OCI-LY7 (cell line): ENCODE measurements at regions of chr9 and their contacts with region 1.

Region 1: GRCh38 chr9:33225319-33226149 is 14.4 kb upstream of the SPINK4 start:
- DNase-seq: peak; percentile 80
- H3K4me3 ChIP-seq: no peak overlapping the region
- H3K27ac ChIP-seq: no peak overlapping the region
- H3K4me1 ChIP-seq: peaks cover 61% of the 10 kb centered on the region
- CTCF ChIP-seq: peak; percentile 96

Region 2: DNA sequence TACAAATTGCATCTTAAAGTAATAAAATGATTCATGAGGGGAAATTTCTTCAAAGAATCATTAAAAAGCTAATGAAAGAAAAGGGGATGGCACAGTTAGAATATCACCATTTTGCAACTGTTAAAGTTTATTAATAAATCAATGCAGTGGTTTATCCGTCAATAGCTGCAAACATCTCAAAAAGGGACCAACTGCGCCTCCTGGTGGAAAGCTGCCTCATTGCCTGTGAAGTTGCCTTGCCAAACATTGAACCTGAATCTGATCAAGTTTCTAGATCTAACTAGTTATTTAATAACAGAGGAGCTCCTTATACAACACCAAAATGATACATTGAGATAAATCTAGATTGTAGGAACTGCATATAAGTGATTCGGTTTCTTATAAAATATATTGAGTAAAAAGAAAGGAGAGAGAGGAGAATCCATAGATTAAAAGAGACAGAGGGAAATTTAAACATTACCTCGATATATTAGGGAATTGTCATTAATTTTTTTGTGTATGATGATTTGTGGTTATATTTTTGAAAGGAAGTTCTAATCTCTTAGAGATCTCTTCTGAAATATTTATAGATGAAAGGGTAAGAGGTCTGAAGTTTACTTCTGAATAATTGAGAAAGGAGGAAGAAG is 645.7 kb before region 1 on chr9:
- CTCF ChIA-PET with region 1: no interaction called
- POLR2A ChIA-PET with region 1: no interaction called
- intact Hi-C with region 1: loop called (anchors 10 kb)
- DNase-seq: peak; percentile 77
- H3K4me3 ChIP-seq: no peak overlapping the region
- H3K27ac ChIP-seq: peak overlapping the region; percentile 7
- H3K4me1 ChIP-seq: peaks cover 43% of the 10 kb centered on the region
- CTCF ChIP-seq: peak; percentile 99

Region 3: DNA sequence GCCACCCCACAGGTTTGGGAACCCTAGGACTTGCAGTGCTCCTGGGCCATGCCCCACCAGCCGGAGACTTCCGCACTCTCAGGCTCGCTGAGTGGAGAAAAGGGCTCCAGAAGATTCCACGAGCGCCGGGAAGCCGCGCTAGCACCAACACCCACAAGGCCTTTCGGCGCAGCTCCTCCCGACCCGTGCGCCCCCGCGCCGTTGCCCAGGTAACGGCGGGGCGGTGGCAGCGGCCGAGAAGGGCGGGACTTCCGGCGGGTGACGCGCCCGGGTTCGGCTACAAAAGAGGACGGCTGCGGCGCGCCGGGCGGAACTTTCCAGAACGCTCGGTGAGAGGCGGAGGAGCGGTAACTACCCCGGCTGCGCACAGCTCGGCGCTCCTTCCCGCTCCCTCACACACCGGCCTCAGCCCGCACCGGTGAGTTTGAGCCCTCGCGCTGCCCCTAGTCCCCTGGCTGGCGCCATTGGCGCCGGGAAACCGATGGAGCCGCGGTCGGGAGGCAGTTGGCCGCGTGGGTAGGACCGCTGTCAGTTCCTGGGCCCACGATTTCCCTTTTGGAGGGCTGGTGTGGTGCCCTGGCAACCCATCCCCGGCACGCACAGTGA is 200.5 kb before region 1 on chr9 and contains the start of gene DNAJA1:
- CTCF ChIA-PET with region 1: no interaction called
- POLR2A ChIA-PET with region 1: interaction called, 6 read pairs
- intact Hi-C with region 1: loop called (anchors 5 kb)
- DNase-seq: peak; percentile 95
- H3K4me3 ChIP-seq: peak within 1 kb of the TSS; percentile 100
- H3K27ac ChIP-seq: peak within 1 kb of the TSS; percentile 79
- H3K4me1 ChIP-seq: peaks cover 59% of the 10 kb centered on the region
- CTCF ChIP-seq: no peak
- total RNA-seq, gene DNAJA1: 110 and 136 TPM in 2 replicates

Region 4: GRCh38 chr9:33081128-33081851 is 144.2 kb before region 1 on chr9:
- CTCF ChIA-PET with region 1: interaction called, 5 read pairs
- POLR2A ChIA-PET with region 1: interaction called, 7 read pairs
- intact Hi-C with region 1: loop called (anchors 1 kb)
- DNase-seq: peak; percentile 86
- H3K4me3 ChIP-seq: peak overlapping the region; percentile 41
- H3K27ac ChIP-seq: no peak overlapping the region
- H3K4me1 ChIP-seq: peaks cover 23% of the 10 kb centered on the region
- CTCF ChIP-seq: peak; percentile 97

Region 5: GRCh38 chr9:33167046-33167808 is 58.3 kb before region 1 on chr9 and contains the start of gene B4GALT1:
- CTCF ChIA-PET with region 1: interaction called, 3 read pairs
- POLR2A ChIA-PET with region 1: no interaction called
- intact Hi-C with region 1: loop called (anchors 2 kb)
- DNase-seq: peak; percentile 95
- H3K4me3 ChIP-seq: peak within 1 kb of the TSS; percentile 93
- H3K27ac ChIP-seq: peak within 1 kb of the TSS; percentile 68
- H3K4me1 ChIP-seq: peaks cover 49% of the 10 kb centered on the region
- CTCF ChIP-seq: 0 out of 2 replicates have a peak, but pooled peaks have one; percentile 23
- total RNA-seq, gene B4GALT1: 8.1 and 12.8 TPM in 2 replicates